Posterior vena cava (tissue), 2 donors: ENCODE measurements at regions of chr9 and their contacts with region 1.

Region 1: GRCh38 chr9:97468658-97469448 is 32.6 kb upstream of the TMOD1 start:
- DNase-seq: peak; percentile 86

Region 2: GRCh38 chr9:97447001-97447400 is 21.9 kb before region 1 on chr9:
- intact Hi-C with region 1: no loop called
- DNase-seq: no peak

Region 3: GRCh38 chr9:97602430-97602829 is 133.6 kb after region 1 on chr9:
- intact Hi-C with region 1: loop called in 1 of 2 experiments (anchors 10 kb)
- DNase-seq: no peak

Region 4: DNA sequence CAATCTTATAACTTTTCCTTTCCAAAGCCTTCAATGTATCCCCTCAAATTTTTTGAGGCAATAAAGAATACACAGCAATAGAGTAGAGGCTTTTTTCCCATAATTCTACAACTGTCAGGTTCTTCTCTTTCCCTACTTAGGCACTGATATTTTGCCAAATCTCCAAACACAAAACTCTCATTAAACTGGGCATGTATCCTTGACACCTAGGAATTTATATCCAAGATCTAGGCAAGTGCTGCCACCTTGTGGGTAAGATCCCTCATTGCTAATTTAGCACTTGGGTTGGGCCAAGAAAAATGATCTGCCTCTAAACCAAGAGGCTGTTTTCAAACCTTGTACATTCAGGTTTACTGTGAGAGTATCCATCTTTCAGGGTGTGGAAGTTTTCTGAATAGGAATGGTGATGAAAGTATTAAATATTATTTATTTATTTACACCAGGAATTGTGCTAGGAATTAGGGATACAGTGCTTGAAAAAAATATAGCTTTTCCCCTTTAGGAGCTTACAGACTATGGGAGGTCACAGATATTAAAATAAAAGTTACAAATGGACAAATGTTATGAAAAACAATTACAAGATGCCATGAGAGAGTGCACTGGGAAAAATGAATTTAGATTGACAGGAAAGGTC is 146.7 kb after region 1 on chr9:
- intact Hi-C with region 1: loop called in 1 of 2 experiments (anchors 5 kb)
- DNase-seq: no peak

Region 5: DNA sequence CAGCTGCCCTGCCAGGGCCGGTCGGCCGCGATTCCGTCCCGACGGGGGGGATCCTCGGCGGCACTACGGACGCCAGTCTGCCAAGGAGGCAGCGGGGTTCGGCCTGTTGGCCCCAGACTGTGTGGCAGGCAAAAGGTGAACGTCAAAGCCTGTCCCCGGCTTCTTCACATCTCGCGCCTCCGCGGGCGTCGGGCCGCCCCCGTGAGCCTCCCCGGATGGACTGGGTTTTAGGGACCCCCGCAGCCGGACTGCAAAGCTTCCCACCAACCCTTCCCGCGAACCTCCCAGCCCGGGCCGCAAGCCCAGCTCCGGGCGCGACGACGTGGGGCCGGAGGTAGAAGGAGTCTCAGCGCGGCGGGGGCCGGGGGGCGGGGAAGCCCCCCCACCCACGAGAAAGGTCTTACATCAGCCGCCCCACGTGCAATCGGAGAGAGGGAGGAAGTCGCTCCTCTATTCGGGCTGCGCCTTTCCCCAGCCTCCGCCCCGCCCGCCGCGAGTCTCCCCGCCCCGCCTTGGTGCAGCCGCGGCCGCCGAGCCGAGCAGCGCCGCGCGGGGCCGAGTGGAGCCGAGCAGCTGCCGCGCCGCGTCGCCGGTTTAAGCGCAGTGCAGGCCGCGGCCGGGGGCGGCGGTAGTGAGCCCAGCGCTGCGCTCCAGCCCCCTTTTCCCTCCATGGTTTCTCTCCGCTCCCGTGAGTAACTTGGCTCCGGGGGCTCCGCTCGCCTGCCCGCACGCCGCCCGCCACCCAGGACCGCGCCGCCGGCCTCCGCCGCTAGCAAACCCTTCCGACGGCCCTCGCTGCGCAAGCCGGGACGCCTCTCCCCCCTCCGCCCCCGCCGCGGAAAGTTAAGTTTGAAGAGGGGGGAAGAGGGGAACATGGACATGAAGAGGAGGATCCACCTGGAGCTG is 514.1 kb after region 1 on chr9 and contains the start of gene ANP32B:
- intact Hi-C with region 1: loop called in 1 of 2 experiments (anchors 10 kb)
- DNase-seq: peak; percentile 97
- total RNA-seq, gene ANP32B: 95.8 to 98.0 TPM